Upper lobe of right lung (tissue), 1 donor: ENCODE measurements at regions of chr20 and their contacts with region 1.

Region 1: DNA sequence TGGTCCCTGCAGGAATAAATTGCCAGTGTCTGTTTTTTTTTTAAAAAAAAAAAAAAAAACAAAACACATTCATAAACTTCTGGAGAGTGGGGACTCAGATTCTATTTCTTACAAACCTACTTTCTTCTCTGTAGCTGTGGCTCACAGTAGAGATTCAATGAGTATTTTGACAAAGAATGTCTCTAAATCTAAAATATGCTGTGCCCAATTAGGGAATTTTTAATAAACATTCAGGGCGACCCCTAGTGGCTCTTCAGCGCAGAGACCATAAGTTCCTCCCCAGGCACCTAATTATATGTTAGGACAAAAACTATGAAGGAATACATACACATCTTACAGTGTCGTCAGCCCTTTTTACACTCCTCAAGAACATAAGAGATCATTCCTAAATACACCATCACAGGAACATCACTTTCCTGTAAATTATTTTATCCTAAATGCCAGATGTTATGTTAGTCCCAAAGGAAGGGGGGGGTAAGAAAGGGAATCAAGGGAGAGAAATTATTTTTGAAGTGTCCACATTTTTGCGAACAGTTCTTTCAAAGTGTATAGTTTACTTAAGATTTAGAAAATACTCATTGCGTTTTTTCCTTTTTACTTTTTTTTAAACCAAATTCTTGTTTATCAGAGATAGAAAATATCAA is 21.8 kb upstream of the NAA20 start:
- DNase-seq: no peak
- ATAC-seq: peak; percentile 73
- H3K4me3 ChIP-seq: no peak overlapping the region
- H3K27ac ChIP-seq: no peak overlapping the region
- H3K4me1 ChIP-seq: peaks cover 55% of the 10 kb centered on the region
- H3K27me3 ChIP-seq: no peaks in the 10 kb centered on the region
- CTCF ChIP-seq: peak; percentile 79

Region 2: GRCh38 chr20:19784511-19785172 is 210.7 kb before region 1 on chr20:
- intact Hi-C with region 1: loop called (anchors 10 kb)
- DNase-seq: peak; percentile 80
- ATAC-seq: peak; percentile 91
- H3K4me3 ChIP-seq: no peak overlapping the region
- H3K27ac ChIP-seq: peak overlapping the region; percentile 61
- H3K4me1 ChIP-seq: peaks cover 35% of the 10 kb centered on the region
- H3K27me3 ChIP-seq: no peaks in the 10 kb centered on the region
- CTCF ChIP-seq: peak; percentile 80

Region 3: GRCh38 chr20:19889011-19889953 is 106.1 kb before region 1 on chr20:
- intact Hi-C with region 1: no loop called
- DNase-seq: no peak
- ATAC-seq: peak; percentile 50
- H3K4me3 ChIP-seq: peak overlapping the region; percentile 43
- H3K27ac ChIP-seq: peak overlapping the region; percentile 82
- H3K4me1 ChIP-seq: peaks cover 52% of the 10 kb centered on the region
- H3K27me3 ChIP-seq: no peaks in the 10 kb centered on the region
- CTCF ChIP-seq: no peak

Region 4: GRCh38 chr20:20343932-20344331 is 348.6 kb after region 1 on chr20:
- intact Hi-C with region 1: no loop called
- DNase-seq: no peak
- ATAC-seq: no peak
- H3K4me3 ChIP-seq: no peak overlapping the region
- H3K27ac ChIP-seq: no peak overlapping the region
- H3K4me1 ChIP-seq: no peaks in the 10 kb centered on the region
- H3K27me3 ChIP-seq: no peaks in the 10 kb centered on the region
- CTCF ChIP-seq: no peak

Region 5: DNA sequence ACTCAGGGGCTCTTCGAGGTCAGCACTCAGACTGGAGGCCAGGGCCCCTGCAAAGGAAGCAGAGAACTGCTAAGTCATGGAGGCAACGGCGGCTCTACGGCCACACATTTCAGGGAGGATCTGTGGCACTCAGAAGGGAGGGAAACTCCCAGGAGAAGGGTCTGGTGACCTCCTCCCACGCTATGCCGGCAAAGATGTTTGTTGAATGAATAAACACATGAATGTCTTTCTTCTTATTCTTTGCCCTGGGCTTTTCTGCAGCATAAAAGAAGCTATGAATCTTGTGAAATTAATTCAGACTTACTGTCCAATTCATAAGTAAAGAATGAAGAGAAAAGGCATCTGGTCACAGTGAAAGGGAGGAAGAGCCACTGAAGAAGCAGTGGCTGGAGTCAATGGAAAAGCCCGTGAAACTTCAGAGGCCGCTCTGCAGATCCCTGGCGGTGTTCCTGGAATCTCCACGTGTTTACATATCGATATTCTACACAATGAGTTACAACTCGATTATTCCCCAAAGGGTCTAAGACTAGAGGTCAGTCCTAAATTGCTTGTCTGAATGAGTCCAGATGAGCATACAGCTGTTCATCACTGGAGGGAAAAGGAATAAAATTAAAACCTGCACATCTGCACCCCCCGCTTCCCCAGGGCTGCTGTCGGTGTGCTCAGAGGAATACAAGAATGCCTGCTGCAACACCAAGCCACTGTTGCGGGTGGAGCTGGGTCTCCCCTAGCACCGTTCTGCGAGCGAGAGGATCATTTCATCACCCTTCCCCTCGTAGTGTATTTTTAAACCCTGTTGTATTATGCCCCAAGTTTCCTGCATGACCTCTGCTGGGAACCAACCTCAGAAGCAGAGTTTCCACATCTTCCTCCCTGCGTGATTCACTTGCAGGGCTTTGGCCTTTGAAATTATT is 398.1 kb after region 1 on chr20:
- intact Hi-C with region 1: no loop called
- DNase-seq: no peak
- ATAC-seq: no peak
- H3K4me3 ChIP-seq: no peak overlapping the region
- H3K27ac ChIP-seq: no peak overlapping the region
- H3K4me1 ChIP-seq: no peaks in the 10 kb centered on the region
- H3K27me3 ChIP-seq: no peaks in the 10 kb centered on the region
- CTCF ChIP-seq: no peak

Region 6: DNA sequence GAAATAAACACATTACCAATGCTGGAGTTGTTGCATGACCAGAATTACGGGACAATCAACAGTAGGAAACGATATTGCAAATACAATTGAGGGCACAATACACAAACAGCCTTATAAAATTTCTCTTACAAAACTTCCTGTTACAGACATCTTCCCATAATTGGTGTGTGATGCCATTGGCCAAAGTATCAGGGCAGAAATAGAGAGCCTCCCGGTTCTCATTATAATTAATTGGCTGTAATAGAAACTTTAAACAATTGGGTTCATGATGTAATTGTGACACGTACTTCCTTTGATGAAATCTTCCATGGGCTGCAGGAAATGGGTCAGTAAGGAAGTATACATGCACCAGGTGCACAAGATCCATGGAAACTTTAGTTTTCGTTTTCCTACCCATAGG is 757.4 kb after region 1 on chr20:
- intact Hi-C with region 1: no loop called
- DNase-seq: no peak
- ATAC-seq: peak; percentile 48
- H3K4me3 ChIP-seq: no peak overlapping the region
- H3K27ac ChIP-seq: peak overlapping the region; percentile 70
- H3K4me1 ChIP-seq: no peaks in the 10 kb centered on the region
- H3K27me3 ChIP-seq: peaks cover 3% of the 10 kb centered on the region
- CTCF ChIP-seq: no peak